A549 (cell line): ENCODE measurements at regions of chr15 and their contacts with region 1.

Region 1: DNA sequence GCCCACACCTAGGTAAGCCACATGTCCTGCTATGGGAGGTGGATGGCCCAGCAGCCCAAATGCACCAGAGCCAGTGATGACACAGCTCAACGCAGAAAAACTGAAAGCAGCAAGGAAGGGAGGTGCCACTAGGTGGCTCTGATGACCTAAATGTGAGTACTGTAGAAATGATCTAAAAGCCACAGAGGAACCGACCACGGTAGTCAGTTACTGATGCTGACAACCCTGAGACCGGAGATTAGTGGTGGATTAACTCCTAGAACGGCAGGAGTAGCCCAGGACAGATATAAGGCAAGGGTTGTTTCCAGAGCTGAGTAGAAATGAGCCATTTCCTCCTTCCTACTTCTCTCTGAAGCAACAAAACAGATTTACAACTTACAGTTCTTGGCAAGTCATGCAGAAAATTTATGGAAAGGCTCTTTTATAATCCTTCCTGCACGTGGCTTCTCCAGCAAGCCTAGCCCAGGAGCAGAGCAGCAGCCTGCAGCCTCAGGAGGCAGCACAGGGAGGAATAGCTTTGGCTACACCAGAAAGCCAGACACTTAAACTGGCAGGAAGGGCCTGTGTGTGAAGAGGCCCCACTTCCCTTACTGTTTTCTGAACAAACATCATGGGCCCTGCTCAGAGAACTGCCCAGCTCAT is 13.1 kb downstream of the FBXL22 start:
- DNase-seq: peak; percentile 85 to 93
- ATAC-seq: peak; percentile 92 to 96
- H3K4me3 ChIP-seq: no peak overlapping the region
- H3K27ac ChIP-seq: peak overlapping the region; percentile 18 to 21; a peak in 3 of 6 replicates
- H3K4me1 ChIP-seq: peaks cover 17% of the 10 kb centered on the region
- CTCF ChIP-seq: peak; percentile 96
- EP300 ChIP-seq: no peak
- POLR2A ChIP-seq: no peak
- RAD21 ChIP-seq: peak; percentile 94 to 95

Region 2: DNA sequence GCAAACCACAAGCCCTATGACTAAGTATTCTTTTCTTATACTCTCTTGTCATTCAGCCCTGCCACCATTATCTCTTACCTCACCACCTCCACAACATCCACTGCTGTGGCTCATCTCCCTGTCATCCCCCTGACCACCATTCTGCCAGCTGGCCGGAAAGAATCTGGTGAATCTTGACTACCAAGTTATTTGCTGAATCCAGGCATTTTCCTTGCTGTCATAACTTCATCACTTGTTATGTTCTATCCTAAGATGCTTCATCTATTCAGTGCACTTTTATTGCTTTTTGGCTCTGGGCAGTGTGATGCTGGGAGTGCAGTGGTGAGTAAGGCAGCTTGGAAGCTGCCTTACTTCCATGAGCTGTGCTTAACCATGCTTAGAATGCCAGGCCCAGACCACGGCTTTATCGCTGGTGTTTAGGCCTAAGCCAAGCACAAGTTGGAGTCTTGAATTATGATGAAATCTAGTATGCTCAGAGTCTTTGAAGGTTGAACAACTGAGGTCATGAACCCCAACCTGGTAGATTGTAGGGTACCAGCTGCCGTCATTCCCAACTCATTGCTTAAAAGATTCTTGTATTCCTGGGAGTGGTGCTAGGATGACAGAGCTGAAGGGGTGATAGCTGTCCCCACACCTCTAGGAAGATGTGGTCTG is 359.9 kb before region 1 on chr15:
- CTCF ChIA-PET with region 1: no interaction called
- POLR2A ChIA-PET with region 1: no interaction called
- DNase-seq: no peak
- ATAC-seq: peak in 1 of 2 experiments; percentile 45; a peak in 3 of 6 replicates
- H3K4me3 ChIP-seq: no peak overlapping the region
- H3K27ac ChIP-seq: no peak overlapping the region; a peak in 1 of 6 replicates
- H3K4me1 ChIP-seq: peaks cover 18% of the 10 kb centered on the region
- CTCF ChIP-seq: no peak
- EP300 ChIP-seq: no peak
- POLR2A ChIP-seq: no peak
- RAD21 ChIP-seq: no peak

Region 3: DNA sequence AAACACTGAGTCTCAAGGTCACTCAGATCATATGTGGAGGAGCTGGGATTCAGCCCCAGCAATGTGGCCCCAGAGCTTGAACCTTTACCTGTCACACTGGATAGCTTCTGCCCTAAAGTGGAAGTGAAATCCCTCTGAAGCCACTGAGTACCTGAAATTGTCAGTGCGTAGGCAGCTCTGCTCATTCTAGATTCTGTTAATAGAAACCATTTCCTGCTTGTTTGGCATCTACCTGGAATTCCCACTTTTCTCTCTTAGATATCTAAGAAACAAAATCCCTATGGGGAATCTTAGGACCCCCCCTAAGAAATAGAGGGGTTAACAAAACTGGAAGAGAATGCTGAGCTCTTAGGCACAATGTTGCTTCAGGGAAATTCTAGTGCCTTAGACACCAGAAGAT is 16.6 kb after region 1 on chr15:
- CTCF ChIA-PET with region 1: interaction called, 46 read pairs
- POLR2A ChIA-PET with region 1: no interaction called
- DNase-seq: no peak
- ATAC-seq: no peak
- H3K4me3 ChIP-seq: no peak overlapping the region
- H3K27ac ChIP-seq: no peak overlapping the region
- H3K4me1 ChIP-seq: no peaks in the 10 kb centered on the region
- CTCF ChIP-seq: no peak
- EP300 ChIP-seq: no peak
- POLR2A ChIP-seq: no peak
- RAD21 ChIP-seq: no peak

Region 4: GRCh38 chr15:63638839-63639238 is 28.5 kb after region 1 on chr15:
- CTCF ChIA-PET with region 1: interaction called, 15 read pairs
- POLR2A ChIA-PET with region 1: no interaction called
- DNase-seq: no peak
- ATAC-seq: no peak
- H3K4me3 ChIP-seq: no peak overlapping the region
- H3K27ac ChIP-seq: no peak overlapping the region
- H3K4me1 ChIP-seq: no peaks in the 10 kb centered on the region
- CTCF ChIP-seq: no peak
- EP300 ChIP-seq: no peak
- POLR2A ChIP-seq: no peak
- RAD21 ChIP-seq: no peak

Region 5: GRCh38 chr15:63663906-63664305 is 53.6 kb after region 1 on chr15:
- CTCF ChIA-PET with region 1: interaction called, 13 read pairs
- POLR2A ChIA-PET with region 1: no interaction called
- DNase-seq: no peak
- ATAC-seq: no peak
- H3K4me3 ChIP-seq: no peak overlapping the region
- H3K27ac ChIP-seq: no peak overlapping the region
- H3K4me1 ChIP-seq: no peaks in the 10 kb centered on the region
- CTCF ChIP-seq: no peak
- EP300 ChIP-seq: no peak
- POLR2A ChIP-seq: no peak
- RAD21 ChIP-seq: no peak

Region 6: GRCh38 chr15:63891079-63891767 is 280.9 kb after region 1 on chr15:
- CTCF ChIA-PET with region 1: interaction called, 15 read pairs
- POLR2A ChIA-PET with region 1: no interaction called
- DNase-seq: peak; percentile 87 to 88
- ATAC-seq: peak; percentile 80 to 96
- H3K4me3 ChIP-seq: no peak overlapping the region
- H3K27ac ChIP-seq: no peak overlapping the region
- H3K4me1 ChIP-seq: peaks cover 3% of the 10 kb centered on the region; the same call in 2 of the 3 replicates
- CTCF ChIP-seq: peak; percentile 98
- EP300 ChIP-seq: no peak
- POLR2A ChIP-seq: no peak
- RAD21 ChIP-seq: peak; percentile 79 to 83

Region 7: DNA sequence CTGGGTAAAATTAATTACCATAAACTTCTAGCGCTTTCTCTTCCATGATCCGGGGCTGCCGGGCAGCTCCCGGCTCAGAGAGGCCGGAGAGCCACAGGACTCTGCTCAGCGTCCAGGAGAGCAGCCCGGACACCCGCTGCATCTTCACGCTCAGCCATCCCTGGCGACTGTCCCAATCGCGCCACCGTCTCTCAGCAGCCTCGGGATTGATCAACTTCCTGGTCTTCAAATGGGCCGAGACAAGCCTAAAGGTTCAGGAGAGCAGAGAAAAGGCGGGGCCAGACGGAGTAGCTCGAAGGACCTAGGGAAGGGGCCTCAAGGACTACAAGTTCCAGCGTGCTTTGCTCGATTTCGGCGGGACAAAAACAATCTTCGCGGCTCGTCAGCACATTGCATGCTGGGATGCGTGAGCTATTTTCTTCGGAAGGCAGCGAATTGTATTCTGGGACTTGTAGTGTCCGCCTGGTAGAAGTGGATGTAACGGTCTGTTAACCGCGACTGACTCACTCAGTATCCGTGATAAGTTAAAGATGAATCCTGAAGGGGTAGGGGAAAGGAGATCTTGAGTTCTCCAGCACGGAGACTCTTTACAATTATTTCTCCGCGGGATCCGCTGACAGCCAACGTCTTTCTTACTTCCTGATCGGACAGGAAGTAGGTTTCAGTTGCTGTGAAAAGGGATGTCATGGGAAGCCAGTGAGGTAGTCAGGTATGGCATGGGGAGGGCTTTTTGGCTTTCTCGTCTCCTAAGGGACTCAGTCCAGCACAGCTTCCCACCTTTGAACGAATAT is 483.5 kb after region 1 on chr15 and contains the start of gene CIAO2A:
- CTCF ChIA-PET with region 1: interaction called, 12 read pairs
- POLR2A ChIA-PET with region 1: no interaction called
- DNase-seq: peak; percentile 96 to 100
- ATAC-seq: peak; percentile 82 to 90
- H3K4me3 ChIP-seq: peak within 1 kb of the TSS; percentile 68
- H3K27ac ChIP-seq: peak within 1 kb of the TSS; percentile 85 to 86
- H3K4me1 ChIP-seq: peaks cover 32% of the 10 kb centered on the region
- CTCF ChIP-seq: no peak
- EP300 ChIP-seq: no peak
- POLR2A ChIP-seq: peak; percentile 82
- RAD21 ChIP-seq: no peak
- polyA plus RNA-seq, gene CIAO2A: 149 and 231 TPM in 2 replicates